Vagina (tissue), 2 donors: ENCODE measurements at regions of chr1 and their contacts with region 1.

Region 1: DNA sequence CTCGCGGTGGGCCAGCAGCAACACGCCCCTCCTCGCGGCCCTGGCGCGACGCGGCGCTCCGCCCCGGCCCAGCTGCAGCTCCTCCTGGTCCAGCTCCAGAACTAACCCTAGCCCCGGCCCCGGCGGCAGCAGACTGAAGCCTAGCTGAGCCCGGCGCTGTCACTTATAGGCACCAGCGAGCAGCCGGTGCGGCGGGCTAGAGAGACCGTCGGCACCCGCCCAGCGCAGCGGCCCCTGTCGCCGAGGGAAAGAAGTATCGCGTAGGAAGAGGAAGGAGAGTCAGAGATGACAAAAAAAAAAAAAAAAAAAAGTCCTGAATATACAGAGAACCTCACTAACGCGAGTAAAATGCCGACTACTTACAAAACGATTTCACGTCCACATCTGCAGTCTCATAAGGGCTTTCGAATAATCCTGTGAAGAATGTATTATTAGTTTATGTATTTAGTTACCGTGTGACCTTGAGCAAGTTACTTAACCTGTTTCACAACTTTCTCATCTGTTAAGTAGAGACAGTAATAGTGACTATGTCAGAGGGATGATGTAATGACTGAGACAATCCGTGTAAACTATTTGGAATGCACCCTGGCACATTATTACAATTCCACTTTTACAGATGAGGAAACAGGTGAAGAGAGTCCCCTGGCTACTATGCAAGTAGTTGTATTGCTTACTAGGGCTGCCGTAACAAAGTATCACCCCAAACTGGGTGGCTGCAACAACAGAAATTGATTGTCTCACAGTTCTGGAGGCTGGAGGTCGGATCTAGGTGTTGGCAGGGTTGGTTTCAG is at the start of gene SLC9A1:
- DNase-seq: peak in 1 of 2 donors; percentile 96
- H3K4me3 ChIP-seq: peak within 1 kb of the TSS; percentile 80 to 86
- H3K27ac ChIP-seq: peak within 1 kb of the TSS; percentile 92
- H3K4me1 ChIP-seq: peaks cover 52% of the 10 kb centered on the region
- H3K27me3 ChIP-seq: no peaks in the 10 kb centered on the region
- CTCF ChIP-seq: peak; percentile 15 to 66 (median 54)
- POLR2A ChIP-seq: peak in 1 of 2 donors; percentile 98
- total RNA-seq, gene SLC9A1: 10.6 TPM

Region 2: DNA sequence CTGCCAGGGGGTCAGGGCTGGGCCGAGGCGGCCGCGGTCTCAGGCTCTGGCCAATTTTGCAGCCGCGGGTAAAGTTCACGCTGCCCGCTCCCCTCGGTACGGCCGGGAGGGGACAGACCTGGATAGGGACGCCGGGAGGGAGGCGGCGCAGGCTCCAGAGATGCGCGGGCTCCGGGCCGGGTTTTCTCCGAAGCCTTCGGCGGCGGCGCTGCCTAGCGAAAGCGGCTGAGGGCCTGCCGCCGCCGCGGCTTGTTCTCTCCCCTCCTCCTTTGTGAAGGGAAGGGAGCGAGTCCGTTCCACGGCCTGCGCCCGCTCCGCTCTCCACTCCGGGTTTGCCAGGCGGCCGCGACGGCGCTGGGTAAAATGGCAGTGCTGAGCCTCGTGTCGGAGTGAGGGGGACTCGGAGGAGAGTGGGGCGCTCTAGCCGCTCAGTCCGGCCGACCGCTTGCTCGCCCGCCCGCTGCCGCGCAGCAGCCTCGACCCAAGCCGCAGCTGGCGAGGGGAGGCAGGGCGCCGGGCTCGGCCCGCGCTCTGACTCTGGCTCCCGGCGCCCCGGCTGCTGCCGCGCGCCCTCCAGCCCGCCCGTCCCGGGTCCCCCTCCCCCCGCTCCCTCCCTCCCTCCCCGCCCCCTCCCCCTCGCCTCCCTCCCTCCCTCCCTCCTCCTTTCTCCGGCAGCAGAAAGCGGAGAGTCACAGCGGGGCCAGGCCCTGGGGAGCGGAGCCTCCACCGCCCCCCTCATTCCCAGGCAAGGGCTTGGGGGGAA is 459.6 kb before region 1 on chr1 and contains the start of gene ARID1A:
- intact Hi-C with region 1: no loop called
- DNase-seq: peak in 1 of 2 donors; percentile 95
- H3K4me3 ChIP-seq: peak within 1 kb of the TSS; percentile 90 to 95
- H3K27ac ChIP-seq: peak within 1 kb of the TSS; percentile 98
- H3K4me1 ChIP-seq: peaks cover 55% of the 10 kb centered on the region
- H3K27me3 ChIP-seq: no peaks in the 10 kb centered on the region
- CTCF ChIP-seq: peak in 2 of 3 experiments; percentile 41 to 51
- POLR2A ChIP-seq: peak in 1 of 2 donors; percentile 94
- total RNA-seq, gene ARID1A: 91.6 TPM

Region 3: DNA sequence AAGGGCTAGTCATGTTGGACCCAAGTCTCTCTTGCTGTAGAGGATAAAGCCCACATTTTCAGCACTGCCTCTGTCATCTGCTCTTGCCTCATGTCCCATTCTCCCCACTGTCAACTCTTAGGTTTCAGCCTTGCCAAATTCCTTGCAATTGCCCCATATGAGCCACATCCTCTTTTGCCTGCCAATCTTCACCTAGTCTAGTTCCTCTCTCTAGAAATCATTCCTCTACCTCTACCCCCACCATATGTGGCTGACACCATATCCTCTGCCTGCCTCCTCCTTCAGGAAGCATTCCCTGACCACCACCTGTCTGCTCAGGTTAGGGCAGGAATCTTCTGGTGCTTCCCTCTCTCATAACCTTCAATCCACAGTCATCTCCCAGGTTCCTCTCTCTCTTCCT is 38.5 kb before region 1 on chr1:
- intact Hi-C with region 1: loop called (anchors 5 kb)
- DNase-seq: no peak
- H3K4me3 ChIP-seq: no peak overlapping the region
- H3K27ac ChIP-seq: no peak overlapping the region
- H3K4me1 ChIP-seq: peaks cover 70% of the 10 kb centered on the region
- H3K27me3 ChIP-seq: no peaks in the 10 kb centered on the region
- CTCF ChIP-seq: no peak
- POLR2A ChIP-seq: no peak